ENCODE measurements at regions of chr20 and their contacts with region 1.

Region 1: GRCh38 chr20:33810885-33811777 is at the start of gene CHMP4B:
- DNase-seq: peak; percentile 99
- H3K4me3 Mint-ChIP-seq: peak within 1 kb of the TSS; percentile 93
- H3K27ac Mint-ChIP-seq: peak within 1 kb of the TSS; percentile 100
- H3K4me1 Mint-ChIP-seq: peaks cover 19% of the 10 kb centered on the region
- H3K27me3 Mint-ChIP-seq: no peaks in the 10 kb centered on the region
- CTCF ChIP-seq: no peak
- total RNA-seq, gene CHMP4B: 77.6 and 95.2 TPM in 2 replicates

Region 2: DNA sequence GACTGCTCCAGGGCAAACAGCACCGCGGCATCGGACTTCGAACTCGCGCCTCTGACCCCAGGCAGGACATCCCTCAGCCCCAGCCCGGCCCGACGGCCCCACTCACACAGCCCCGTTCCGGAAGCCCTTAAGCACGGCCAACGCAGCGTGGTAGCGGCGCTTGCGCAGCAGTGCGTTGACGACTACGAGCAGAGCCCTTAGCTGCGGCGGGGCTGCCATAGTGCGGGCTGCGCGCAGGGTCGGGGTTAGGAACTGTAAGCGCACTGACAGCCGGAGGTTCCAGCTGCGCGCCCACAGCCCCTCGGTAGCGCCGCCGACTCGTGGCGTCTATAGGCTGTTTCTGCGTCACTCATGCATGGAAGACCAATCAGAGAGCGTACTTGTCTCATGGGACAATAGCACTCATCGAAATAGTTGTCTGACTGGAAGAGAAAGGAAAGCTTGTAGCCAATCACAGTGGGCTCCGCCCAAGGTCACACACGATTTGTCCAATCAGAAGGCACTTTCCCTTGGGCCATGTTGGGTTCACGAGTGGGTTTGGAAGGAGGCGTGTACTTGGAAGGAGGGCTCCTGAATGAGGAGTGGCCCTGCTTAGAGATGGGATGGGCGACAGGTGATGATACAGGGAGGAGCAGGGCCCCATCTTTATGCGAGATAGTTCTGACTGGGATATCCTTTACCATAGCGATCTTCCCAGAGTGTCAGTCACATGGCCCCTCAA is 91.0 kb before region 1 on chr20 and contains the start of gene PXMP4:
- CTCF ChIA-PET with region 1: interaction called, 3 read pairs
- POLR2A ChIA-PET with region 1: interaction called, 28 read pairs
- intact Hi-C with region 1: no loop called
- DNase-seq: peak; percentile 98
- H3K4me3 Mint-ChIP-seq: peak within 1 kb of the TSS; percentile 67
- H3K27ac Mint-ChIP-seq: peak within 1 kb of the TSS; percentile 0
- H3K4me1 Mint-ChIP-seq: peaks cover 9% of the 10 kb centered on the region
- H3K27me3 Mint-ChIP-seq: no peaks in the 10 kb centered on the region
- CTCF ChIP-seq: no peak
- total RNA-seq, gene PXMP4: 3.9 and 5.2 TPM in 2 replicates

Region 3: DNA sequence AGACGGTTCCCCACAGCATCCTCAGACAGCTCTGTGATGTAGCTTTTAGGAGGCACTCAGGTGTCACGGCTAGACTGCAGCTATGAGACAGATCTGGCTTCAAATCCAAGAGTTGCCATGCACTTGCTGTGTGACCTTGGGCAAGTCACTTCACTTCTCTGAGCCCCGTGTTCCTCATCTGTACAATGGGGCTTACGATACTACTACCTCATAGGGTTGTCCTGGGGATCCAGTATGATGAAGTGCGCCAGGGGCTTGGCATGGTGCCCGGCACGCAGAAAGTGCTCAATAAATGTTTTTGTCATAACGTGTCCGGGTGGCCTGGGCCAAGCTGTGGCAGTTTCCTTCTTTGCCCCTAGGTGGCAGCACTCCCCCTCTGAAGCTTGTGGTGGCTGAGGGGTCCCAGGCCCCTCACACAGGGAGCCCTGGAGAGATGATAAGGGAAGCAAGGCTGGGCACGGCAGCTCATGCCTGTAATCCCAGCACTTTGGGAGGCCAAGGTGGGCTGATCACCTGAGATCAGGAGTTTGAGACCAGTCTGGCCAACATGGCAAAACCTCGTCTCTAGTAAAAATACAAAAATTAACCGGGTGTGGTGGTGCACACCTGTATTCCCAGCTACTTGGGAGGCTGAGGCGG is 19.1 kb before region 1 on chr20:
- CTCF ChIA-PET with region 1: interaction called, 14 read pairs
- POLR2A ChIA-PET with region 1: interaction called, 97 read pairs
- intact Hi-C with region 1: loop called (anchors 1 kb)
- DNase-seq: peak; percentile 48
- H3K4me3 Mint-ChIP-seq: no peak overlapping the region
- H3K27ac Mint-ChIP-seq: no peak overlapping the region
- H3K4me1 Mint-ChIP-seq: peaks cover 24% of the 10 kb centered on the region
- H3K27me3 Mint-ChIP-seq: no peaks in the 10 kb centered on the region
- CTCF ChIP-seq: peak; percentile 87

Region 4: DNA sequence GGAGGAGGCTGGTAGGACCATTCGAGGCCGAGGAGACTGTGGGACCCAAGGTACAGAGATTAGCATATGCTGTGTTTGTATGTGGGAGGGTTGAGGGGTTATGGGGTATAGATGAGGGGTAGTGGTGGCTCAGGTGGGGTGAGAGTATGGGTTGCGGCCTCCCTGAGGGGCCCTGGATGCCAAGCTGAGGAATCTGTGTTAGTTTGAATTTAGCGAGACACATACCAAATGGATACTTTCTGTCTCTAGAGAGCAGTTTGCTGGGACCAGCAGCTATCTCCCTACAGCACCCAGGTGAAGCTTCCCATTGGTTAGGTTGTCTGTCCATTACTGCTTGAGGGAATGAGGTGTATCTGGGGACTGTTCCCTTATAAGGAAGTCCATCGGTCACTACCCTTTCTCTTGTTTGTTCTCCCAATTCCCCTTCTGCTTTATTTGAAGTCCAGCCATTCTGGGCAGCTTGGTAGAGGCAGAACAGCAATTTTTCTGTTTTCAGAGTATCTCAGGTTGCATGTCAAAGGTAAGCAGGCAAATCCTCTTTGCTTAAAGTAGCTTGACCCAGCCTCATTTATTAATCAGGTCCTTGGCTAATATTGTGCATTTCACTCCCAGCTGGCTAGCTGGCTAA is 15.3 kb after region 1 on chr20:
- CTCF ChIA-PET with region 1: interaction called, 7 read pairs
- POLR2A ChIA-PET with region 1: interaction called, 36 read pairs
- intact Hi-C with region 1: no loop called
- DNase-seq: peak; percentile 5
- H3K4me3 Mint-ChIP-seq: no peak overlapping the region
- H3K27ac Mint-ChIP-seq: peak overlapping the region; percentile 24
- H3K4me1 Mint-ChIP-seq: peaks cover 23% of the 10 kb centered on the region
- H3K27me3 Mint-ChIP-seq: no peaks in the 10 kb centered on the region
- CTCF ChIP-seq: no peak

Region 5: DNA sequence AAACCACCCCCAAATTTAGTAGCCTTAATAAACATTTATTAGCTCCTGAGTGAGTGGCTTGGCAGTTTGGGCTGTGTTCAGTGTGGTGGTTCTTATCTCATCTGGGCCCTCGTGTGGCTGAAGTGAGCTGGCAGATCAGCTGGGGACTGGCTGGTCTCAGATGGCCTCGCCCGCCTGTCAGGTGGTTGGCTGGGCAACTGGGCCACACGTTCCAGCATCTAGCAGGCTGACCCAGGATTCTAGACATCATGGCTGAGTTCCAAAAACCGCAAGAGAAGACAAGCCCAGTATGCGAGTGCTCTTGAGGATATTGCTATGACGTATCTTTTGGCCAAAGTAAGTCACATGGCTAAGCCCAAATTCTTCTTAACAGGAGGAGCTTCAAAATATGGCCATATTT is 272.0 kb after region 1 on chr20:
- CTCF ChIA-PET with region 1: no interaction called
- POLR2A ChIA-PET with region 1: interaction called, 17 read pairs
- intact Hi-C with region 1: no loop called
- DNase-seq: peak; percentile 96
- H3K4me3 Mint-ChIP-seq: no peak overlapping the region
- H3K27ac Mint-ChIP-seq: peak overlapping the region; percentile 82
- H3K4me1 Mint-ChIP-seq: peaks cover 24% of the 10 kb centered on the region
- H3K27me3 Mint-ChIP-seq: no peaks in the 10 kb centered on the region
- CTCF ChIP-seq: no peak